Activated CD4-positive, alpha-beta T cell treated with anti-CD3 and anti-CD28 coated beads, Interleukin-2, amount 10 ng/mL, durations not matched to agents 7 days and 5 days (primary cell): ENCODE measurements at regions of chr7 and their contacts with region 1.

Region 1: GRCh38 chr7:66844552-66845378 is 76.3 kb upstream of the TMEM248 start:
- DNase-seq: peak; percentile 99
- H3K4me3 Mint-ChIP-seq: peak overlapping the region; percentile 95
- H3K27ac Mint-ChIP-seq: peak overlapping the region; percentile 100
- H3K4me1 Mint-ChIP-seq: peaks cover 34% of the 10 kb centered on the region
- H3K27me3 Mint-ChIP-seq: no peaks in the 10 kb centered on the region

Region 2: GRCh38 chr7:66779669-66780409 is 64.9 kb before region 1 on chr7:
- CTCF ChIA-PET with region 1: no interaction called
- POLR2A ChIA-PET with region 1: no interaction called
- DNase-seq: no peak
- H3K4me3 Mint-ChIP-seq: no peak overlapping the region
- H3K27ac Mint-ChIP-seq: no peak overlapping the region
- H3K4me1 Mint-ChIP-seq: peaks cover 8% of the 10 kb centered on the region
- H3K27me3 Mint-ChIP-seq: no peaks in the 10 kb centered on the region

Region 3: DNA sequence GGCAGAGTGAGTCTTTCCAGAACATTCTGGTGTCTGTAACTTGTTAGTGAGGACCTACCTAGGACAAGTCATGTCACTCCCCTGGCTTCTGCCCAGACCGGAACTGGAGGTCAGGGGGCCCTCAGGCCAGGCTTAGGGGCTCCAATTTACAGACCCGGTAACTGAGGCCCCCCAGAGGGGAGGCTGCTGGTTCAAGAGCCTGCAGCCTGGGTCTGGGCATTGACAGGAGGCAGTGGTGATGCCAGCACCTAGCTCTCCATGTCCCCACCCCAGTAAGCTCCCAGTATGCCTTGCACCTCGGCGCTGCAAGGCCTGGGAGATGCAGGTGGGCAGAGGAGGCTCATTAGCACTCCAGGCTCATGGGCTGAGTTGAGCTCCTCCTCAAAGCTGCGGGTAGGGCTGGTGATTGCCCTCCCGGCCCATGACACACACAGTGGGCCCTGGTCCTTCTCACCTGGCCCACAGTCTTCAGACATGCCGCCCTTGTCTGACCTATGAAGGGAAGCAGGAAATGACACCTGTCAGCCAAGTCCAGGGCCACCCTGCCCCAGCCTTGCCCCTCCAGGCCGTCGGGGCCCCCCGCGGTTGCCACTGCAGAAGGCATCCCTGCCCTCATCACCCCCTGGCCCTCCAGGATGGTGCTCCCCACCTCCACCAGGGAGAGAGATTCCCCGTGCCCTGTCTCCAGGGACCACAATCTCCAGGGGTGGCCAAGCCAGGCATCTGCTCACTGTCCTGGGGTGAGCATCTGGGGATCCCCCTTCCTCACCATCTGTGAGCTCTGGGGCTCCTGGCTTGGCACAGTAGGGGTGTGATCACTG is 12.0 kb before region 1 on chr7:
- CTCF ChIA-PET with region 1: interaction called, 10 read pairs
- POLR2A ChIA-PET with region 1: no interaction called
- DNase-seq: no peak
- H3K4me3 Mint-ChIP-seq: no peak overlapping the region
- H3K27ac Mint-ChIP-seq: no peak overlapping the region
- H3K4me1 Mint-ChIP-seq: no peaks in the 10 kb centered on the region
- H3K27me3 Mint-ChIP-seq: no peaks in the 10 kb centered on the region